ENCODE measurements at regions of chr22 and their contacts with region 1.

Region 1: GRCh38 chr22:31148953-31149627 is 8.8 kb upstream of the PLA2G3 start:
- DNase-seq: no peak
- H3K4me3 Mint-ChIP-seq: no peak overlapping the region
- H3K27ac Mint-ChIP-seq: no peak overlapping the region
- H3K4me1 Mint-ChIP-seq: peaks cover 7% of the 10 kb centered on the region
- H3K27me3 Mint-ChIP-seq: peaks cover 2% of the 10 kb centered on the region

Region 2: DNA sequence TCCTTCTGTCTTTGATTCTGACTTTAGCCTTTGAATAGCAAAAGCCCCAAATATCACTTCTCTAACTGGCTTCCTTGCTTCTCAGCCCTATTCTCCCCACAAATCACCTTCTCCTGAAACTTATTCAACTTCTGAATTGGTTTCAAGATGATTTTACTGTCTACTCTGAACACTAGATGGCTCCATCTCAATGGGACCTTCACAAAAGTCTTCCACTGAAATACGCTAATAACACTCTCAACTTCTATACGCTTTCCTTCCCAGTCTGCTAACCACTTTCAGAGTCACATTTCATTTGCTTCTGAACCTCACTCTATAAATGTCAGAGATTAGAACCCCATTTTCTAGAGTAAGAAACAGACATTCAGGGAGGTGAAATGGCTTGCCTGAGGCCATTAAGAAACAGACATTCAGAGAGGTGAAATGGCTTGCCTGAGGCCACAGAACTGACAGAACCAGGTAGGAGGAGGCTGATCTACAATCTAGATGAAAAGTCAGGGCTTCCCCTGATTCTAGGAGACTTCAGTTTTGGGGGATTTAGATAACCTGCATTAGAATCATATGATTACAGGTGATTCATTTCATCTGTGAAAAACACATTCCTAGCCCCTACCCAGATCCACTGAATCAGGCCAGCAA is 201.2 kb before region 1 on chr22:
- intact Hi-C with region 1: loop called (anchors 2 kb)
- DNase-seq: no peak
- H3K4me3 Mint-ChIP-seq: no peak overlapping the region
- H3K27ac Mint-ChIP-seq: no peak overlapping the region
- H3K4me1 Mint-ChIP-seq: peaks cover 39% of the 10 kb centered on the region
- H3K27me3 Mint-ChIP-seq: no peaks in the 10 kb centered on the region

Region 3: GRCh38 chr22:31075961-31076360 is 73.1 kb before region 1 on chr22:
- intact Hi-C with region 1: no loop called
- DNase-seq: no peak
- H3K4me3 Mint-ChIP-seq: no peak overlapping the region
- H3K27ac Mint-ChIP-seq: no peak overlapping the region
- H3K4me1 Mint-ChIP-seq: peaks cover 5% of the 10 kb centered on the region
- H3K27me3 Mint-ChIP-seq: peaks cover 4% of the 10 kb centered on the region

Region 4: DNA sequence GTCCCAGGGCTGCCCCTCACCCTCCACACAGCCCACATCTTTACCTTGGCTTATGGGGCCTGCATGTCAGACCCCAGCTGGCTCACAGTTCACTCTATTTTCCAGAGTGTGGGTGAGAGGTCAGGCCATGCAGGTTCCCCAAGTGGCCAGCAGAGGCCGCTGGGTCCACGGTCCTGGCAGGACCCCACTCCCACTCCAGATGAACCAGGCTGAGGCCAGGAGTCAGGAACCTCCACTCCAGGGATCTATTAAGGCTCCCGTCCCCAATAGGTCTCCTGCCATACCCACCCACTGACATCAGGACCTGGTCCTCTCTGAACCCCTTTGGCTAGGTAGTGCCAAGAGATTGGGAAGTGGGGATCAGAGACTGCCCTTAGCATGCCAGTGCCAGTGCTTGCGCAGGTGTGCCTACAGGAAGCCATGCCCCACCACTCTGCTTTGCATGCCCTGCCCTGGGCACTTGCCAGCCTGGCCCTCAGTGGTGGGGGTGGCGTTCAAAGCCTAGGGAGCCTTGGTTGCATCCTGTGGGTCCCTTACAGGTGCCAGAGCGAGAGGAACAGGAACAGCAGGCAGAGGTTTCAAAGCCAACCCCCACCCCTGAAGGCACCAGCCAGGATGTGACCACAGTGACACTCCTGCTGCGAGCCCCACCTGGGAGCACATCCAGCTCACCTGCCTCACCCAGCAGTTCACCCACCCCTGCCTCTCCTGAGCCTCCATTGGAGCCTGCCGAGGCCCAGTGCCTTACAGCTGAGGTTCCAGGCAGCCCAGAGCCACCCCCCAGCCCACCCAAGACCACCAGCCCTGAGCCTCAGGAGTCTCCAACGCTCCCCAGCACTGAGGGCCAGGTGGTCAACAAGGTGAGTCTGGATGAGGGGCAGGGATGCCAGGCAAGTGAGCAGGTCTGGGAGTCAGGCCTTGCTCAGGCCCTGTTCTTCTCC is 59.7 kb before region 1 on chr22:
- intact Hi-C with region 1: loop called (anchors 1 kb)
- DNase-seq: no peak
- H3K4me3 Mint-ChIP-seq: no peak overlapping the region
- H3K27ac Mint-ChIP-seq: no peak overlapping the region
- H3K4me1 Mint-ChIP-seq: peaks cover under 1% of the 10 kb centered on the region
- H3K27me3 Mint-ChIP-seq: no peaks in the 10 kb centered on the region